Activated T-helper 1 cell treated with anti-CD3 and anti-CD28 coated beads, Interleukin-12 subunit alpha, Interleukin-12 subunit beta, Interleukin-2, Interleukin-4 antibody, amounts not matched to agents 30 ng/mL and 10 ng/mL and 1 ng/mL, durations not matched to agents 14 hours and 24 hours and 36 hours (primary cell): ENCODE measurements at regions of chr19 and their contacts with region 1.

Region 1: GRCh38 chr19:10403137-10404021 is at the start of gene CDC37:
- DNase-seq: peak; percentile 98
- H3K4me3 Mint-ChIP-seq: peak within 1 kb of the TSS; percentile 94
- H3K27ac Mint-ChIP-seq: peak within 1 kb of the TSS; percentile 96
- H3K4me1 Mint-ChIP-seq: peaks cover 51% of the 10 kb centered on the region
- H3K27me3 Mint-ChIP-seq: no peaks in the 10 kb centered on the region
- total RNA-seq, gene CDC37: 320 and 326 TPM in 2 replicates

Region 2: GRCh38 chr19:10238172-10238783 is 165.1 kb before region 1 on chr19:
- intact Hi-C with region 1: no loop called
- DNase-seq: no peak
- H3K4me3 Mint-ChIP-seq: no peak overlapping the region
- H3K27ac Mint-ChIP-seq: no peak overlapping the region
- H3K4me1 Mint-ChIP-seq: peaks cover 14% of the 10 kb centered on the region
- H3K27me3 Mint-ChIP-seq: no peaks in the 10 kb centered on the region

Region 3: GRCh38 chr19:10269333-10270179 is 133.8 kb before region 1 on chr19:
- intact Hi-C with region 1: loop called (anchors 1 kb)
- DNase-seq: peak; percentile 84
- H3K4me3 Mint-ChIP-seq: peak overlapping the region; percentile 94
- H3K27ac Mint-ChIP-seq: peak overlapping the region; percentile 94
- H3K4me1 Mint-ChIP-seq: peaks cover 28% of the 10 kb centered on the region
- H3K27me3 Mint-ChIP-seq: no peaks in the 10 kb centered on the region

Region 4: DNA sequence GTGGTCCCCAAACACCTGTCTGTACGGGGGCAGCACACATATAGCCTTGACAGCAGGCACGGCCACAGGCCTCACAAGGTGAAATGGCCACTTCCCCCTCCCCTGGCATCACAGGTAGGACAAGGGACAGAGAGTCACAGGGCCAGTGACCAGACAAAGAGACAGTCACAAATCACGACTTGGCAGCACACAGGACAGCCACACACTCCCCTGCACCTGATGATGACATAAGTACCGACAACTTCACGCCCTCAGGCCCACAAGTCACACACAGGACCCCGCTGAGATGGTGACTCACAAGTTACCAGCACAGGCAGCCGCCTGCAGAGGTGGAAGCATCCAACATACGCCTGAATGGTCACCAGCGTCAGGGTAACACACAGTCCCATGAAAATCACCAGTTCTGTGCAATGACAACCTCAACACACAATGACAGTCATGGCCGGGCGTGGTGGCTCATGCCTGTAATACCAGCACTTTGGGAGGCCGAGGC is 39.5 kb before region 1 on chr19:
- intact Hi-C with region 1: no loop called
- DNase-seq: no peak
- H3K4me3 Mint-ChIP-seq: no peak overlapping the region
- H3K27ac Mint-ChIP-seq: no peak overlapping the region
- H3K4me1 Mint-ChIP-seq: no peaks in the 10 kb centered on the region
- H3K27me3 Mint-ChIP-seq: no peaks in the 10 kb centered on the region

Region 5: DNA sequence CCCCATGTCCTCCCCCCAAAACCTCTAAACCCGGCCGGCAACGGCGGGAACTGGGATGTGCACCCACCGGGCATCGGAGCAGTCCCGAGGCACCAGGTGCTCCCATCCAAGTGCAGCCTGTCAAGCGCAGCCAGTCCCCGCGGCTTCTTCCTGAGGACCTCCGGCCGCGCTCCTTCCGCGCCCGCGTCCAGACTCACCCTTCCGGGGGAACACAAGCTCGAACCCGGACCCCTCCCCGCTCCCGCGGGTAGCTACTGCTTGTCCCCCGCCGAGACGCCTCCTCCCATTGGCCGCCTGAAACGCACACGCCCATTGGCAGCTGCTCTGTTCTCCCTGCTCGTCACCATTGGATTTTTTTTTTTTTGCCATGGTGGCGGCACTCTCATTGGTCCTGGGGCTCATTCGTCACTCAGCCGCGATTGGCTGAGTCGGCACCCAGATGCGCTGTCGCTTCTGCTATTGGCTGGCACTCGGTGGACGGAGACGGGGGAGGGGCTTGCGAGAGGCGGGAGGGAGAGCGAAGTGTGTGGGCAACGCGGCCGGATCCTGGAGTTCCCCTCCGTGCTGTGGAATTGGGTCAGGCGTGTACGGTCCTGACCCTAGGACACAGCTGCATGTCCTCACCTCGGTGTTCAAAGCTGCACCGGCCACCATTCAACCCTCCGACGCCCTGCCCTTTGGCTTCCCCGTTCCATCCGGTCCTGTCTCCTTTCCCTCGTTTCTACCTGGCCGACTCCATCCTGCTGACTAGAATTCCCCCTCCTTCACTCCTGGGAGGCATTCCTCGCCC is 22.9 kb before region 1 on chr19 and contains the start of gene TYK2:
- intact Hi-C with region 1: loop called (anchors 1 kb)
- DNase-seq: peak; percentile 98
- H3K4me3 Mint-ChIP-seq: peak within 1 kb of the TSS; percentile 95
- H3K27ac Mint-ChIP-seq: peak within 1 kb of the TSS; percentile 97
- H3K4me1 Mint-ChIP-seq: peaks cover 27% of the 10 kb centered on the region
- H3K27me3 Mint-ChIP-seq: peaks cover 3% of the 10 kb centered on the region
- total RNA-seq, gene TYK2: 268 and 271 TPM in 2 replicates

Region 6: DNA sequence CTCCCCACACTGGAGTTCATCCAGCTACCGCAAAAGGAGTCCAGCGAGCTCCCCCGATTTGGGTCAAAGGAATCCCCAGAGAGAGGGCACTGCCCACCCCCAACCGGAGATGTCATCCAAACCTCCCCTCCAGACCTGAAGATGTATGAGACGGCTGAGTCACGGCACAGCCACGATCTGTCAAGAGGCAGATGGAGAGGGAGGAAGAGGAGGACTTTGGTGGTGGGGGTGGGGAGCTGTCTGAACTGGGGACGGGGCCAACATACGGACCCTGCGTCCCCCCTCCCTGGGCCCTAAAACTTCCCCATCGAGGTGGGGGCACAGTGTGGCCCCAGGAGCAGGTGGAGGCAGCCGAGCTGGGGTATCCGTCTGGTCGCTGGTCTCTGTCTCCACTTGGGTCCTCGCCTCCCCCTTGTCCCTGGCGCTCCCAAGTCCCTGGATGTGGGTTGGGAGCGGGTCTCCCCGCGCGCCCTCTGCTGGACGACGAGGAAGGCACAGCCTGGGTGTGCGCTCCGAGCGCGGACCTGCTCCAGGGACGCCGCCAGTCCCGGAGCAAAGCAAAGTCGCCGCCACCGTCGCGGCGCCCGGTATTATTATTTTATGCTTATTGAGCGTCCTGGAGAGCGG is 20.7 kb after region 1 on chr19:
- intact Hi-C with region 1: loop called (anchors 1 kb)
- DNase-seq: peak; percentile 58
- H3K4me3 Mint-ChIP-seq: peak overlapping the region; percentile 85
- H3K27ac Mint-ChIP-seq: peak overlapping the region; percentile 75
- H3K4me1 Mint-ChIP-seq: peaks cover 73% of the 10 kb centered on the region
- H3K27me3 Mint-ChIP-seq: peaks cover 2% of the 10 kb centered on the region

Region 7: GRCh38 chr19:10461047-10461790 is 57.8 kb after region 1 on chr19:
- intact Hi-C with region 1: loop called (anchors 1 kb)
- DNase-seq: peak; percentile 81
- H3K4me3 Mint-ChIP-seq: no peak overlapping the region
- H3K27ac Mint-ChIP-seq: peak overlapping the region; percentile 29
- H3K4me1 Mint-ChIP-seq: no peaks in the 10 kb centered on the region
- H3K27me3 Mint-ChIP-seq: no peaks in the 10 kb centered on the region

Region 8: GRCh38 chr19:10473192-10473591 is 69.8 kb after region 1 on chr19:
- intact Hi-C with region 1: no loop called
- DNase-seq: no peak
- H3K4me3 Mint-ChIP-seq: no peak overlapping the region
- H3K27ac Mint-ChIP-seq: no peak overlapping the region
- H3K4me1 Mint-ChIP-seq: peaks cover 13% of the 10 kb centered on the region
- H3K27me3 Mint-ChIP-seq: no peaks in the 10 kb centered on the region

Region 9: GRCh38 chr19:10502524-10503001 is 99.2 kb after region 1 on chr19:
- intact Hi-C with region 1: loop called (anchors 1 kb)
- DNase-seq: peak; percentile 92
- H3K4me3 Mint-ChIP-seq: peak overlapping the region; percentile 94
- H3K27ac Mint-ChIP-seq: peak overlapping the region; percentile 88
- H3K4me1 Mint-ChIP-seq: peaks cover 31% of the 10 kb centered on the region
- H3K27me3 Mint-ChIP-seq: no peaks in the 10 kb centered on the region